ENCODE measurements at regions of chr1 and their contacts with region 1.

Region 1: GRCh38 chr1:150529017-150529416 is 13.5 kb downstream of the FALEC start:
- DNase-seq: peak; percentile 60
- H3K4me3 ChIP-seq: no peak overlapping the region
- H3K27ac ChIP-seq: no peak overlapping the region
- H3K4me1 ChIP-seq: peaks cover 16% of the 10 kb centered on the region
- H3K27me3 ChIP-seq: no peaks in the 10 kb centered on the region
- CTCF ChIP-seq: no peak

Region 2: GRCh38 chr1:150259758-150260669 is 269.0 kb before region 1 on chr1:
- CTCF ChIA-PET with region 1: no interaction called
- dilution Hi-C with region 1: no loop called
- in situ Hi-C with region 1: loop called (anchors 10 to 25 kb)
- intact Hi-C with region 1: loop called (anchors 5 kb)
- DNase-seq: peak; percentile 56
- H3K4me3 ChIP-seq: peak overlapping the region in 2 of 3 experiments; percentile 2 to 11
- H3K27ac ChIP-seq: peak overlapping the region; percentile 19
- H3K4me1 ChIP-seq: peaks cover 45% of the 10 kb centered on the region
- H3K27me3 ChIP-seq: no peaks in the 10 kb centered on the region
- CTCF ChIP-seq: no peak

Region 3: DNA sequence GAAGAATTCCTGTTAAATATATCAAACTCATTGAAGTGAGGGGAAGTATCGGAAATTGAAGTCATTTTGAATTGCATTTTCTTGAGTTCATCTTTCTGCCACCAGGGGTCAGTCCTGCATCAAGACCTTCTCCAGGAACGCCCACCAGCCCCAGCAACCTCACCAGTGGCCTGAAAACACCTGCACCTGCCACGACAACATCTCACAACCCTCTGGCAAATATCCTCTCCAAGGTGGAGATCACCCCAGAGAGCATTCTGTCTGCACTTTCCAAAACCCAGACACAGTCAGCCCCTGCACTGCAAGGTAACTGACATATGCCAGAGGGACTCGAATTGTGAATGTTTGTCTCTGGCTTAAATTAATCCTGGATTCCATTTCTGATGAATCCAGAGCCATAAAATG is 64.6 kb before region 1 on chr1:
- CTCF ChIA-PET with region 1: interaction called, 3 read pairs
- dilution Hi-C with region 1: no loop called
- in situ Hi-C with region 1: loop called in 1 of 2 experiments (anchors 5 kb)
- intact Hi-C with region 1: loop called (anchors 1 kb)
- DNase-seq: peak; percentile 42
- H3K4me3 ChIP-seq: no peak overlapping the region
- H3K27ac ChIP-seq: no peak overlapping the region
- H3K4me1 ChIP-seq: peaks cover 10% of the 10 kb centered on the region
- H3K27me3 ChIP-seq: no peaks in the 10 kb centered on the region
- CTCF ChIP-seq: peak; percentile 76 to 77

Region 4: DNA sequence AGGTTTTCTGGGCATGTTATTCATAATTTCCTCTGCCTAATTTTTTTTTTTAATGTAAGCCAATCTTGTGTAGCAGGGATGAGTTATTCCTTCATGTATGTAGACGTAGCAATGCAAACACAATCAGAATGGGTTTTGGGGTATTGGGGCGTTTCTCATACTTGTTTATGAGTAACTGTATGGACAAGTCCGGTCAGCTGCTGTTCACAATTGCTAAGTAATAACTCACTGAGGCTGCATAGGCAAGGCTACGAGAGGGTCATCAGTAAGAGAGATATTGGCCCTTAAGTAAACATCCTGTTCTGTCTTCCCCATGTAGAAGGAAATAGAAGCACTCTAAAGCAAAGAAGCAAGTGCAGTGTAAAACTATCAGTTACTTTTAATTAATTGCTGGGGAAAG is 51.3 kb before region 1 on chr1:
- CTCF ChIA-PET with region 1: no interaction called
- dilution Hi-C with region 1: no loop called
- in situ Hi-C with region 1: loop called in 1 of 2 experiments (anchors 5 kb)
- intact Hi-C with region 1: no loop called
- DNase-seq: peak; percentile 92
- H3K4me3 ChIP-seq: no peak overlapping the region
- H3K27ac ChIP-seq: peak overlapping the region; percentile 94
- H3K4me1 ChIP-seq: peaks cover 25% of the 10 kb centered on the region
- H3K27me3 ChIP-seq: no peaks in the 10 kb centered on the region
- CTCF ChIP-seq: no peak

Region 5: DNA sequence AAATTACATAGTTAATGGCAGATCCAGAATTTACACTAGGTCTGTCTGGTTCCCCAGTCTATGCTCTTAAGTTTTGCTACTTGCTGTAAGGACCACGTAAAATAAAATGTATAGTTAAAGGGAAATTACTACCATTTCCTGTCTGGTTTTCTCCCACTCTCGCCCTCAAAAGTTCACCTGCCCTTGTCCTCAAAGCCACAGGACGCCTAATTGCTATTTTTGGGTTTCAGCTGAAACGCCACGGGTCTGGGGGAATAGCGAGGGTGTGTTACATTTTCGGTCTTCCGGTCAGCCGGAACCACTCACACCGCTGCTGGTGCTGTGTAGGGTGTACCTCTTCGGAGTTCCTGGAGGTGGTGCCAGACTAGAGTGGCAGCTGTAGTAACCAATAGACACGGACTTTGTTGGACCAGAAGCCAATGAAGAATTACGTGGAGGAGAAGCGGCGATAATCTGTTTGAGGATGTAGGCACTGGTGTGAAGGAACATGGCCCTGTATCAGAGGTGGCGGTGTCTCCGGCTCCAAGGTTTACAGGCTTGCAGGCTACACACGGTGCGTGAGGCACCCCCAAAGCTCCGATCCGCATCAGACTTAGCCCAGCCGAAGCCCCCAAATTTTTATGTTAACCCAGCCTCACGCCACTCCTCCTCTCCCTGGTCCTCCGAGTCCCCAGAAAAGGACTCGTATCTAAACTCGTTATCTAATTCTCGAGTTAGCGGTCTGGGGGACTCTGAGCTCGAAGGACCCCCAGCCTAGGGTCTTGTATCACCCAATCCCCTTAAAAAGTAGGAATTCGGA is 41.9 kb before region 1 on chr1 and contains the start of gene TARS2:
- CTCF ChIA-PET with region 1: no interaction called
- dilution Hi-C with region 1: loop called (anchors 5 kb)
- in situ Hi-C with region 1: no loop called
- intact Hi-C with region 1: loop called (anchors 1 kb)
- DNase-seq: peak; percentile 97
- H3K4me3 ChIP-seq: peak within 1 kb of the TSS; percentile 66 to 81 (median 69)
- H3K27ac ChIP-seq: peak within 1 kb of the TSS; percentile 83
- H3K4me1 ChIP-seq: peaks cover 16% of the 10 kb centered on the region
- H3K27me3 ChIP-seq: no peaks in the 10 kb centered on the region
- CTCF ChIP-seq: peak in 1 of 2 donors; percentile 29
- total RNA-seq, gene TARS2: 23.3 to 27.0 TPM

Region 6: DNA sequence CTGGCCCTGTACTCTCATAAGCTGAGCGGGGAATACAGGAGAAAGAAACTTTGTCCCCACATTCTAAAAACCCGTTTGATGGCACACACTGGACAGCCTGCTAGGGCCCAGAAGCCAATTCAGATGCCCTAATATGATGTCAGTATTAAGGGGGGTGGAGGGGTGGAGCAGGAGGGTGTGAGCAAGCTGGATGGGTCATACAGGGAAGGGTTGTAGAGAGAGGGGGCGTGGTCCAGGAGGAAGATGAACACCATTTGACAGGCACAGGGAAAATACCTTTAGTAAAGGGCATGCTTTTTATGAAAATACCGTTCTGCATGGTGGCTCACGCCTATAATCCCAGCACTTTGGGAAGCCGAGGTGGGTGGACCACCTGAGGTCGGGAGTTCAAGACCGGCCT is 35.9 kb before region 1 on chr1:
- CTCF ChIA-PET with region 1: no interaction called
- dilution Hi-C with region 1: loop called (anchors 5 kb)
- in situ Hi-C with region 1: no loop called
- intact Hi-C with region 1: no loop called
- DNase-seq: no peak
- H3K4me3 ChIP-seq: no peak overlapping the region
- H3K27ac ChIP-seq: no peak overlapping the region
- H3K4me1 ChIP-seq: peaks cover 1% of the 10 kb centered on the region
- H3K27me3 ChIP-seq: no peaks in the 10 kb centered on the region
- CTCF ChIP-seq: no peak